ENCODE measurements at regions of chr1 and their contacts with region 1.

Region 1: DNA sequence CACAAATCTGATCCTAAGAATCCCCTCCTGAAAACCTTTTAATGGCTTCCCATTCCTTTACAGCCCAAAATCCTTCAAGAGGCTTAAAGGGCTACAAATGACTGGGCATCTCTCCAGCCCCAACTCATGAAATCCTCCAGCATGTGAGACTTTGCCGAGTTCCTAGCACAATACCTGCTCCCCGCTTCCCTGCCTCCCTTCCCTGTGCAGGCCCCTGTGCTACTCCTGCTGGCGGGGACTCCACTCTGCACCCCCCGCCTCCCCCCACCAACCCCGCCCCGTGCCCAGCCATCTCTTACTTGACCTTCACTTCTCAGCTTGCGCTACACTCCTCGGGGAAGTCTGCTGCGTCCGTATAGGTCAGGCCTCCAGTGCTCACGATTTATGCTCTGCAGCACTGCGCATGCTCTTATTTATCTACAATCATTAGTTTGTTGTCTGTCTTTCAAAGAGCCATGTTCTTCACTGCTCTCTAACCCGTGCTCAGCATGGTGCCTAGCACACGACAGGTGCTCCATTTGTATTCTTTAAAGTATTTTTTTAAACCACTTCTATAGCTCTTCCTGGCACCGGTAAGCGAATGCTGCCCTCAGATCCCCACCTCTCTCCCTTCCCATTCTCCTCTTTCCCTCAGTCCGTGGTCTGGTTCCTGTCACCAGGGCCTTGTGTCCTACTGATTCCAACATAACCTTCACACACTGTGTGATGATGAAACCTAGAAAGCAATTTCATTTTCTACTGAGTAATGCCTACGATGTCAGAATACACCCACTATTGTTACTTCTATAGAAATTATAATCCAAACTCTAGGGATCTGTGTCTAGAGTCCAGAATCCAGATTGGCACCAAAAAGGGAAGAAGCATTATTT is 37.5 kb upstream of the PLA2G2C start:
- DNase-seq: no peak

Region 2: GRCh38 chr1:20124456-20125057 is 99.2 kb before region 1 on chr1:
- intact Hi-C with region 1: no loop called
- DNase-seq: peak in 21 of 42 donors; percentile 12 to 72 (median 31)

Region 3: DNA sequence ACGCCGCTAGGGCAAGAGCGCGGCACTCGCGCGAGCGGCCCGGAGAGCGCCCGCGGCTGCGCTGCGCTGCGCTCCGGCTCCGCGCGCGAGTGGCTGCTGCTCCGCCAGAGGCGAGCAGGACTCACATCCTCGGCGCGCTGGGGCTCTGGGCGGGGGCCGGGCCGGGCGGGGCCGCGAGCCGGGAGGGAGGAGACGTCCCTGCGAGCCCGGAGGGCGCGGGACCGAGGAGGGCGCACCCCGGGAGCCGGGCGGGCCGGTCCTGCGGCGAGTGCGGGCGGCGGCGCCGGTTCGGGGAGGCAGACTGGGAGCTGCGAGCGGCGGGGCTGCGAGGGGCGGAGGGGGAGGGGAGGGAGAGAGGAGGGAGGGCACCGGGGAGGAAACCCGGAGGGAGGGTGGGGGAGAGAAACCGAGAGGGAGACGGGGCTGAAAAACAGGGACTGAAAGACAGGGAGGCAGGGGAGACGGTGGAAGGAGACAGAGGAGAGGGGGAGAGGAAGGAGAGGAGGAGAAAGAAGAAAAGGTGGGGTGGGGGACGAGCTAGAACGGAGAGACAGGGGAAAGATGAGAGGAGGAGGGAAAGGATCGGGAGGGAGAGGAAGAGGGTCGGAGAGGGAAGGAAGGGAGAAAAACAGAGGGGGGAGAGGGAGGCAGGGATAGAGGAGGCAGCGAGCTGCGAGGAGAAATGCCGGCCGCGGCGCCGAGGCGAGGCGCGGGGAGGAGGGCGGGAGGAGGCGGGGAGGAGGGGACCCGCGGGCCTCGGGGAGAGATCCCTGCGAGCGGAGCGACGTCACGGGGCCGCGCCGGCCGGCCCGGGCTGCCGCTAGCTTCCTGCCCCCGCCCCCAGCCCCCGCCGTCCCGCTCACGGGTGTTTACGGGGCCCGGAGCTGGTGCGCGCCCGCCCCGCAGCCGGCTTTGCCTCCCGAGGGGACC is 262.0 kb after region 1 on chr1 and contains the start of gene CAMK2N1:
- intact Hi-C with region 1: loop called (anchors 5 kb)
- DNase-seq: peak; percentile 63 to 95 (median 88)